ENCODE measurements at regions of chr10 and their contacts with region 1.

Region 1: DNA sequence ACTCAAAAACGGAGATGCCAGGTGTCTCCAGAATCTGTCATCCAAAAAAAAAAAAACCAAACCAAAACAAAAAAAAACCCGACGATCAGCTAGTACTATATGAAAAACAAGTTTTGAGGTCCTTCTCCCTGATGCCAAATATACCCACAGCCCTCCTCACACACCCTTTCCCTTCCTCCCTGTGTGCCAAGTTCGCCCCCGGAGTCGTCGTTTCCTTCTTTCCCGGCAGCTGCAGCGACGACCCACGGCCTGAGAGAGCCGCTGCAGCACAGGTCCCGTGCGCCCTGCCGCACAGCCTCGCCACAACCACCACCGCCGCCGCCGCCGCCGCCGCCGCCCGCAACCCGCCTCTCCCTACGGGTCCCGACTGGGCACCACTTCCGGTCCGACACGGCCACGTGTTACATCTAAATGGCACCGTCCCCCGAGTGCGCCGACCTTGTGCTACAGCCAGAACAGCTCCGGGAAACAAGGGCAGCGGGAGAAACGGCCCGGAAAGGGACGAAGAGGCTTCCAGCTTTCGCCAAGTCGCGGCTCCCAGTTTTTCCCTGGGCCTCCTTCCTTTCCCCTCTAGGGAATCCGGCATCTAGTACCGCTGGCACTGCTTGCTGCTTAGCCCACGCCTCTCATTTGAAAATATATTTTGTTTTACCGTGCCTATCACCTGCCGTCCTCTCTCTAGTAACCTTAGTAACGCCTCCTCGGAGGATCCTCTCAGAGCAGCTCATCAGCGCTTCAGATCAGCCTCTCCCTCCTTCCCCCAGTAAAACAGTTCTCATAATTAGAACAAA is at the start of gene FRA10AC1:
- DNase-seq: peak; percentile 96
- ATAC-seq: peak; percentile 98
- total RNA-seq, gene FRA10AC1: 16.8 TPM

Region 2: DNA sequence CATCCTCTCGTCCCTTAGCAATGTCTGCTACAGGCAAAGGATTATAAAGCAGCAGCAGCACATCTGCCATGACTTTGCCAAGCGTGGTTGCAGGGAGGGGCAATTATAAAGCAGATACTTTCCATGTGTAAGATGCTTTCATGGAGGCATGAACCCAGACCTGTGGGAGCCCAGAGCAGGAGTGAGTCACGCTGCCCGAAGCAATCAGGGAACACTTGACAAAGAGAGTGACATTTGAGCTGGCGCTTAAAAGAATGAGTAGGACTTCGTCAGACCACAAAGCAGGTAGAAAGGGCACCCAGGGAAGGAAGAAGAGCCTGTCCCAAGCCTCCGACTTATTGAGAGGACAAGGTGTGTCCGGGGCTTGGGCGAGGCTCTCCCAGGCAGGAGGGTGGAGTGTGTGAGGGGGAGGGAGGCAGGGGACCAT is 367.5 kb before region 1 on chr10:
- intact Hi-C with region 1: no loop called
- DNase-seq: no peak
- ATAC-seq: no peak

Region 3: DNA sequence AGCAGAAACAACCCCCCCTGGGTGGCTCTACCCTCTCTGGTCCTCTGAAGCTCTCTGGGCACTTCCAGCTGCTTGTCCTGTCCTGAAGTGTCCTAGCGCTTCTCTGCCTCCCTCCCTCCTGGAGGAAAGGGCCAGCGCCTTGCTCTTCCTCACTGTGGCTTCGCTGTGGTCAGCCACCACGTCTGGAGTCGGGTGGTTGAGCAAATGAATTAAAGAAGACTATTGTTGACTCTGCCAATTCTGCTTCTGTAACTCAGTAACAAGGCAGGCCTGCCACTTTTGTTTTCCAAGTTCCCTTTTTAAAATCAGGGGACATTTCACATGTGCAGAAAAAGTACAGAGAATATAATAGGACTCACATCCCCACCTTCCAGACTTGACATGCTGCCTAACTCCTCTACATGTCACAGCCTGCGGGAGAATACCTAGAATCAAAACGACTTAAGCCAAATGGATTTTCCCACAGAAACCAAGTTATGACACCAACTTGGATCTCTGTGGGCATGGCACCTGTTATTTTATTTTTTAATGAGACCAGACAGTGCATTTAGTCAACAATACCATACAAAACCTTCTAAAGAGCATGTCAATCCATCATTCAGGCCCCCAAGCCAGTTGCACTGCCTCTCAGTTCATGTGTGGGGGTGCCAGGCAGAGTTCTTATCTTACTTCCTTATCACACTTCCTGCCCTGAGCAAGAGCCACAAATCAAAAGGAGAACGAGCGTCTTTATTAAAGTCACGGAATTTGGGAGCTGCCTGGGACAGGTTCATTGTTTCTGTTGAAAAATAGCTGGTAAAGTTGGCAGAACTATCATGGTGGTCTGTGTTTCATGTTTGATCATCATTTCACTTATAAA is 129.1 kb before region 1 on chr10:
- intact Hi-C with region 1: no loop called
- DNase-seq: peak; percentile 78
- ATAC-seq: peak; percentile 75

Region 4: GRCh38 chr10:93813507-93814465 is 111.4 kb after region 1 on chr10:
- intact Hi-C with region 1: loop called (anchors 2 kb)
- DNase-seq: peak; percentile 57
- ATAC-seq: peak; percentile 79

Region 5: DNA sequence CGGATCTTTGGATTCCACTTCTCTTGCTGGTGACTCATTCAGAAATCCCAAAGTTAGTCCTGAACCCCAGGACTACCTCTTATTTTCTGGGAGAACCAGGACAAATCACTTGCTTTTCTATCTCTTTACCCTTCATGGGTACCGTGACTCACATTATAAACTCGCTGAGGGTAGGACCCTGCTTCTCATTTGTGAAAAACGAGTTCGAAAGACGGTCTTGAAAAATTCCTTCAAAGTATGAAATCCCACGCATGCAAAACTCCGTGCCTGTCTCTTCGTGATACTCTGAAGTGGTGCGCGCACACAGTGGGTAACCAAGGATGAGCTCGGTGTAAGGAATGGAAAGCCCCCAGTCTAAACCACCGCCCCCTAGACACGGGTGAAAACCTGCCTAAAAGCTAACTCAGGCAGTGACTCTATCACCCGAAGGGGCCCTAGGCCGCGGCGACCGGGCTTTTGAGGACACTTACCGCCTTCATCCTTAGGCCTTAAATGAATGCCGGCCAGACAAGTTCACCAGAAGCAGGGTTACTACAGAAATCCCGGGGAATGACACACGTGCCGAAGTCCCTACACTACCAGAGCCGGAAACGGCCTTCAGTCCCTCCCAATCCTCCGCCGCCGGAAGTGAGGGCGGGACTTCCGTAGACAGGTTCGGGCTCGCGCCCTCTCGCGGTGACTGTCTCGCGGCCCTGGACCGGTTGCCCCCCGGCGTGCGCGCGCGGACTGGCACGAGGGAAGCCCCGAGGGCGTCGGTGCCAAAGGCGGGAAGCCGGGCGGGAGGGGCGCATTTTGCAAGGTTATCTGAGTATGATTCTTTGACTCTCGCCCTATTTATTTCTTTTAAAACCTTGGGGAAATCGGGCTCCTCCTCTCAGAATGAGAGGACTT is 660.2 kb after region 1 on chr10 and contains the start of gene NOC3L:
- intact Hi-C with region 1: no loop called
- DNase-seq: peak; percentile 97
- ATAC-seq: peak; percentile 100
- total RNA-seq, gene NOC3L: 8.1 TPM

Measured in Right ventricle myocardium inferior (tissue), 1 donor.